Activated CD8-positive, alpha-beta T cell treated with anti-CD3 and anti-CD28 coated beads for 36 hours (primary cell): ENCODE measurements at regions of chr17 and their contacts with region 1.

Region 1: GRCh38 chr17:75632863-75633485 is at the start of gene SMIM5:
- DNase-seq: peak; percentile 88
- ATAC-seq: peak; percentile 93
- H3K4me3 Mint-ChIP-seq: no peak within 1 kb of the TSS
- H3K27ac Mint-ChIP-seq: no peak within 1 kb of the TSS
- H3K4me1 Mint-ChIP-seq: peaks cover 4% of the 10 kb centered on the region
- H3K27me3 Mint-ChIP-seq: no peaks in the 10 kb centered on the region
- CTCF ChIP-seq: peak; percentile 95
- total RNA-seq, gene SMIM5: 0.07 to 0.25 TPM

Region 2: GRCh38 chr17:75601057-75602051 is 31.6 kb before region 1 on chr17:
- CTCF ChIA-PET with region 1: interaction called, 31 read pairs
- POLR2A ChIA-PET with region 1: interaction called, 4 read pairs
- intact Hi-C with region 1: no loop called
- DNase-seq: peak; percentile 82
- ATAC-seq: peak; percentile 94
- H3K4me3 Mint-ChIP-seq: no peak overlapping the region
- H3K27ac Mint-ChIP-seq: no peak overlapping the region
- H3K4me1 Mint-ChIP-seq: no peaks in the 10 kb centered on the region
- H3K27me3 Mint-ChIP-seq: no peaks in the 10 kb centered on the region
- CTCF ChIP-seq: peak; percentile 75

Region 3: GRCh38 chr17:75645889-75646637 is 13.1 kb after region 1 on chr17:
- CTCF ChIA-PET with region 1: interaction called, 52 read pairs
- POLR2A ChIA-PET with region 1: interaction called, 7 read pairs
- intact Hi-C with region 1: no loop called
- DNase-seq: peak; percentile 36
- ATAC-seq: peak; percentile 88
- H3K4me3 Mint-ChIP-seq: no peak overlapping the region
- H3K27ac Mint-ChIP-seq: peak overlapping the region; percentile 60
- H3K4me1 Mint-ChIP-seq: peaks cover 4% of the 10 kb centered on the region
- H3K27me3 Mint-ChIP-seq: no peaks in the 10 kb centered on the region
- CTCF ChIP-seq: no peak

Region 4: GRCh38 chr17:75667021-75667790 is 34.2 kb after region 1 on chr17 and contains the starts of genes RECQL5 and SAP30BP:
- CTCF ChIA-PET with region 1: interaction called, 23 read pairs
- POLR2A ChIA-PET with region 1: interaction called, 6 read pairs
- intact Hi-C with region 1: no loop called
- DNase-seq: peak; percentile 99
- ATAC-seq: peak; percentile 100
- H3K4me3 Mint-ChIP-seq: no peak within 1 kb of the TSS
- H3K27ac Mint-ChIP-seq: peak within 1 kb of the TSS; percentile 63
- H3K4me1 Mint-ChIP-seq: peaks cover 37% of the 10 kb centered on the region
- H3K27me3 Mint-ChIP-seq: no peaks in the 10 kb centered on the region
- CTCF ChIP-seq: no peak
- total RNA-seq, gene RECQL5: 33.3 to 34.2 TPM
- total RNA-seq, gene SAP30BP: 73.0 to 75.8 TPM

Region 5: DNA sequence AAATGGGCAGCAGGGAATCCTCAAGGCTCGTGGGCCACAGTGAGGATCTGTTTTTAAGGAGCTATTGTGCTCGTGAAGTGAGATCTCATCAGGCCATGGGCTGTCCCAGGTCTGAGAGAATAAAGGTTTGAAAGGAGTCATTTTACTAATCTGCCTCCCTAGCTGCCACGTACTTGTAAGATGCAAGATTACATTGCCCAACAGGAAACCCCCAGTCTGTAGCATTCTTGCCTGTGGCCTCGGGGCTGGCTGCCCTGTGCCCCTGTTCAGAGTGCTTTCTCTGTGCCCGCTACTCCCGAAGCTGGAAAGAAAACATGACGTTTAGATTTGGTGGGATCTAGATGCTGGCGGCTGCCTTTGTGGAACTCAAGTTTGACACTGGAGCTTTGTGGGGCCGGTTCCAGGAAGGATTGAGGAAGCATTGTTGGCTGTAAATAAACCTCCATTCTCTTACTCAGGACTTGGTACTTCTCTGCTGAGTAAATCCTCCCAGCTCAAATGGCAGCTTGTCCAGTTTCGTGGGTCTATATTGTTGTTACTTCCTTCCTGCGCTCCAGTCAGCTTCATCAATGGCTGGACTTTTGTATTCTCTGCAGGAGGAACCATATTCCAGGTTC is 55.3 kb after region 1 on chr17:
- CTCF ChIA-PET with region 1: interaction called, 11 read pairs
- POLR2A ChIA-PET with region 1: no interaction called
- intact Hi-C with region 1: no loop called
- DNase-seq: peak; percentile 56
- ATAC-seq: peak; percentile 26
- H3K4me3 Mint-ChIP-seq: no peak overlapping the region
- H3K27ac Mint-ChIP-seq: peak overlapping the region; percentile 86
- H3K4me1 Mint-ChIP-seq: peaks cover 74% of the 10 kb centered on the region
- H3K27me3 Mint-ChIP-seq: no peaks in the 10 kb centered on the region
- CTCF ChIP-seq: no peak

Region 6: DNA sequence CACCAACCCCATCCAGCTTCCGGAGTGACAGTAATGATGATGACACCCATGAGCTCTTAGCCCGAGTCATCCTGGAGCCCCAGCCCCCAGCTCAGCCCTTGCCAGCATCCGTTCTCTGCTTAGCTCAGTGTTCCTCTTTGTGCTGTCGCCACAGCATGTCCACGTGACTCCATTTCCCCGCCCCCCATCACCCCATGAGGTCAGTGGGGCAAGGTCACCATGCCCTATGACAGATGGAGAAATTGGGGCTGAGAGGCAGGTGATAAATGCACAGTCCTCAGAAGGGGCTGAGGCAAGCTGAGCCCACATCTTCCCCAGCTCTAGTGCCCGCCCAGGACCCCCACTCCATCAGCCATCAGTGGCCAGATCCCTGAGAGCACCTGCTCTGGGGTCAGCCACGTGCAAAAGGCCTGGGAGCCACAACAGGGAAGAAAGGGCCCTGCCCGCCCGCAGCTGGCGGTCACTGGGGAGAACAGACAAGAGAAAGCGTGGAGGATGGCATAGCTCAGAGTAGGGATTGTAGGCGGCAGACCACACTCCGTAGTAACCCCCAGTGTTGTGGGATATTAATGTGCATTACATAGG is 105.3 kb after region 1 on chr17:
- CTCF ChIA-PET with region 1: interaction called, 14 read pairs
- POLR2A ChIA-PET with region 1: interaction called, 5 read pairs
- intact Hi-C with region 1: no loop called
- DNase-seq: peak; percentile 74
- ATAC-seq: peak; percentile 95
- H3K4me3 Mint-ChIP-seq: no peak overlapping the region
- H3K27ac Mint-ChIP-seq: peak overlapping the region; percentile 65
- H3K4me1 Mint-ChIP-seq: peaks cover 6% of the 10 kb centered on the region
- H3K27me3 Mint-ChIP-seq: peaks cover 2% of the 10 kb centered on the region
- CTCF ChIP-seq: no peak

Region 7: GRCh38 chr17:75959051-75959838 is 326.3 kb after region 1 on chr17:
- CTCF ChIA-PET with region 1: no interaction called
- POLR2A ChIA-PET with region 1: no interaction called
- intact Hi-C with region 1: no loop called
- DNase-seq: no peak
- ATAC-seq: no peak
- H3K4me3 Mint-ChIP-seq: no peak overlapping the region
- H3K27ac Mint-ChIP-seq: no peak overlapping the region
- H3K4me1 Mint-ChIP-seq: peaks cover 6% of the 10 kb centered on the region
- H3K27me3 Mint-ChIP-seq: no peaks in the 10 kb centered on the region
- CTCF ChIP-seq: no peak